ENCODE measurements at regions of chr13 and their contacts with region 1.

Region 1: DNA sequence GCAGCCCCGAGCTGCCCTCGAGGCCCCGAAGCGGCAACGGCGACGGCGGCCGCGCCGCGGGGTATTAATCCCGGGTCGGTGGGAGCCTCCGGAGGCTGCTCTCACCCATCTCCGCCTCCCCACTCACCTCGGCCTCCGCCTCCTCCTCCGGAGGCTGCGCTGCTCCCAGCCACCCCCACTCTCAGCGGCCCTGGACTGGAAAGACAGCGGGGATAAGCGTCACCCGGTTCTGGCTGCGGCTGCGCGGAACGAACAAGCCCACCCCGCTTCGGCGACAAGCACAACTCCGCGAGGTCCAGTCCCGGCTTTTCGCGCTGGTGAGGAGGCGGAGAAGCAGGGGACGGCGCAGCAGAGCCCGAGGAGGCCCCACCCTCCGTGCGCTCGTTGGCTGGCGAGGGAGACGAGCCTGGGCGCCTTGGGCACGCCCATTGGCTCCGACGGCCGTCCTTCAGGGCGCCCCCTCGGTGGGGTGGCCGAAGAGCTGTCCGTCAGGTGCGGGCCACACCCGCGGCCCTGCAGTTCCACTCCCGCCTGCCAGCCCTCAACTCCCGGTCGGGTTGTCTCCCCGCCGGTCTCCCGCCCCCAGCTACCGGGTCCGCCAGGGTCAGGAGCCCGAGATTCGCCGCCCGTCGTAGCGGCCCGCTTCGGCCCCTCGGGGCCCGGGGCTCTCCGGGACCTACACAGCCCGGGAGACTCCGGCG is at the start of gene ZMYM5:
- DNase-seq: peak; percentile 97 to 99
- H3K4me3 ChIP-seq: peak within 1 kb of the TSS; percentile 75
- CTCF ChIP-seq: no peak
- POLR2A ChIP-seq: peak in 1 of 2 donors; percentile 27
- total RNA-seq, gene ZMYM5: 14.1 to 20.0 (median 18.0) TPM

Region 2: GRCh38 chr13:19959831-19960652 is 96.6 kb after region 1 on chr13:
- intact Hi-C with region 1: loop called (anchors 5 kb)
- DNase-seq: peak; percentile 84 to 96
- H3K4me3 ChIP-seq: peak overlapping the region; percentile 65
- CTCF ChIP-seq: peak in 2 of 3 donors; percentile 62 to 92
- POLR2A ChIP-seq: no peak

Region 3: GRCh38 chr13:20288561-20288960 is 425.1 kb after region 1 on chr13:
- intact Hi-C with region 1: no loop called
- DNase-seq: no peak
- H3K4me3 ChIP-seq: no peak overlapping the region
- CTCF ChIP-seq: no peak
- POLR2A ChIP-seq: no peak

Region 4: GRCh38 chr13:21486322-21486721 is 1622.8 kb after region 1 on chr13:
- intact Hi-C with region 1: loop called (anchors 5 kb)
- DNase-seq: no peak
- H3K4me3 ChIP-seq: no peak overlapping the region
- CTCF ChIP-seq: no peak
- POLR2A ChIP-seq: no peak

Measured in lower leg skin (tissue), 4 donors.